Activated T-helper 1 cell treated with anti-CD3 and anti-CD28 coated beads, Interleukin-12 subunit alpha, Interleukin-12 subunit beta, Interleukin-2, Interleukin-4 antibody, amounts not matched to agents 30 ng/mL and 10 ng/mL and 1 ng/mL, durations not matched to agents 14 hours and 24 hours and 36 hours (primary cell): ENCODE measurements at regions of chr13 and their contacts with region 1.

Region 1: GRCh38 chr13:45393941-45394570 is 24.1 kb downstream of the SLC25A30 start:
- DNase-seq: no peak
- H3K4me3 Mint-ChIP-seq: no peak overlapping the region
- H3K27ac Mint-ChIP-seq: no peak overlapping the region
- H3K4me1 Mint-ChIP-seq: peaks cover 51% of the 10 kb centered on the region
- H3K27me3 Mint-ChIP-seq: no peaks in the 10 kb centered on the region

Region 2: GRCh38 chr13:44191504-44192171 is 1202.4 kb before region 1 on chr13:
- intact Hi-C with region 1: loop called (anchors 10 kb)
- DNase-seq: peak; percentile 17
- H3K4me3 Mint-ChIP-seq: no peak overlapping the region
- H3K27ac Mint-ChIP-seq: no peak overlapping the region
- H3K4me1 Mint-ChIP-seq: peaks cover 35% of the 10 kb centered on the region
- H3K27me3 Mint-ChIP-seq: peaks cover 51% of the 10 kb centered on the region

Region 3: GRCh38 chr13:45055198-45055901 is 338.7 kb before region 1 on chr13:
- intact Hi-C with region 1: loop called (anchors 2 kb)
- DNase-seq: peak; percentile 3
- H3K4me3 Mint-ChIP-seq: no peak overlapping the region
- H3K27ac Mint-ChIP-seq: peak overlapping the region; percentile 4
- H3K4me1 Mint-ChIP-seq: peaks cover 20% of the 10 kb centered on the region
- H3K27me3 Mint-ChIP-seq: peaks cover 51% of the 10 kb centered on the region

Region 4: GRCh38 chr13:45367358-45367757 is 26.7 kb before region 1 on chr13:
- intact Hi-C with region 1: loop called (anchors 1 kb)
- DNase-seq: peak; percentile 86
- H3K4me3 Mint-ChIP-seq: peak overlapping the region; percentile 64
- H3K27ac Mint-ChIP-seq: peak overlapping the region; percentile 91
- H3K4me1 Mint-ChIP-seq: peaks cover 55% of the 10 kb centered on the region
- H3K27me3 Mint-ChIP-seq: no peaks in the 10 kb centered on the region

Region 5: DNA sequence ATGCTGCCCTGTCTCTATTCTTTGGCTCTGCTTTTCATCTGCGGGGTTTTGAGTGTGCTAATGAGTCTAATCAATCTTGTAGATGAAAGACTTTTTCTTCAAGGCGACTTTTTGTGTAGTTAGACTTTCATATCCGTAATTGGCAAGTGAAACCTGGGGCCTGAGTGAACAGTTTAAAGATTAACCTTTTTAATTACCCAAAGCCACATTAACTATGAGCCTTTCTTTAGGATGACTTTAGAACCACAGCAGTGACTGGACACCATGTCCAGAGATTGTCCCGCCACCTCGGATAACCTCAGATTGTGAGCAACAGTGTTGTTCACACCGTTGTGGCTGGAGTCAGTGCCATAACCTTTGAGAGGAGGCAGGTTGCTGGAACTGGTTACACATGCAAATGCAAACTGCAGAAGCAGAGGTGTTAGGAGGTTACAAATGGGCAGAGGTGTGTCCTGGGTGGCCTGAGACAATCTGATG is 398.8 kb after region 1 on chr13:
- intact Hi-C with region 1: no loop called
- DNase-seq: no peak
- H3K4me3 Mint-ChIP-seq: no peak overlapping the region
- H3K27ac Mint-ChIP-seq: no peak overlapping the region
- H3K4me1 Mint-ChIP-seq: no peaks in the 10 kb centered on the region
- H3K27me3 Mint-ChIP-seq: no peaks in the 10 kb centered on the region

Region 6: GRCh38 chr13:46160471-46161066 is 766.5 kb after region 1 on chr13:
- intact Hi-C with region 1: loop called (anchors 5 kb)
- DNase-seq: peak; percentile 45
- H3K4me3 Mint-ChIP-seq: peak overlapping the region; percentile 79
- H3K27ac Mint-ChIP-seq: peak overlapping the region; percentile 89
- H3K4me1 Mint-ChIP-seq: peaks cover 59% of the 10 kb centered on the region
- H3K27me3 Mint-ChIP-seq: no peaks in the 10 kb centered on the region